ENCODE measurements at regions of chr11 and their contacts with region 1.

Region 1: GRCh38 chr11:75896843-75897419 is 81.9 kb downstream of the UVRAG start:
- DNase-seq: no peak
- ATAC-seq: peak in 1 of 2 donors; percentile 46
- H3K4me3 ChIP-seq: no peak overlapping the region
- H3K27ac ChIP-seq: no peak overlapping the region
- H3K4me1 ChIP-seq: peaks cover 13 to 21% of the 10 kb centered on the region in 2 donors
- H3K27me3 ChIP-seq: no peaks in the 10 kb centered on the region
- CTCF ChIP-seq: peak; percentile 61 to 74 (median 63)
- POLR2A ChIP-seq: no peak

Region 2: DNA sequence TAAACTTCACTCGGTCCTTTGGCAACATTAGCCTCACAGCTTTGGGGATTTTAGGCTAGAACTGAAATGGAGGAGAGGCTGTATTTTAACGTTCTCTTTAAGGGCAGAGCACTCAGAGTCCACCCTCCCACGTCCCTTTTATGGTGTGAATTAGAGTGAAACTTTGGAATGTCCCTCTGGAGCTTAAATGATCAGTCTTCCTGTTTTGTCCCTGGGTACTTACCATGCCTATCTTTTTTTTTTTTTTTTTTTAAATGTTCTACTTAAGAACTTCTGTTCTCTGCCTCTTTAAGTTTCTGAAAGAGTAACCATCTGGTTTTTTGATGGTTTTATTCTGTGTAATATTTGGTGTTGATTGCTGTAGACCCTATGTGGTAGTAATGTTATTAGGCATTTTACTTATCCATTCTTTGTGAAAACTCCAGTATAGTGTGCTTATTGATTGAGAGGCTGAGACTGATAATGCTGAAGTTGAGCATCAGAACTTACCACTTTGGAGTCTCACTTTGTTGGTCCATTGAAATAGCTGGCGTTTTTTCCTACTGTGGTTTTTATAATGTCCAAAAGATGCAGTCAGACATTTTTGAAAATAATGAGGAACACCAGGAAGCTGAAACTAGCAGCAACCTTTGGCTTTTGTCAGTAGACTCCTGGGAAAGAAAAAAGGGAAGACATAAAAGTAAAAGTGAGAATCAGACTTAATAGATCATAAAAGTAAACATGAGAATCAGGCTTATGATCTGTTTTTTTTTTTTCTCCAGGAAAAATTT is 70.3 kb before region 1 on chr11:
- in situ Hi-C with region 1: no loop called
- intact Hi-C with region 1: no loop called
- DNase-seq: no peak
- ATAC-seq: peak; percentile 89 to 94
- H3K4me3 ChIP-seq: peak overlapping the region; percentile 3 to 31 (median 27)
- H3K27ac ChIP-seq: peak overlapping the region; percentile 70 to 87 (median 80)
- H3K4me1 ChIP-seq: peaks cover 24 to 31% of the 10 kb centered on the region in 2 donors
- H3K27me3 ChIP-seq: no peaks in the 10 kb centered on the region
- CTCF ChIP-seq: no peak
- POLR2A ChIP-seq: peak in 1 of 2 donors; percentile 21

Region 3: DNA sequence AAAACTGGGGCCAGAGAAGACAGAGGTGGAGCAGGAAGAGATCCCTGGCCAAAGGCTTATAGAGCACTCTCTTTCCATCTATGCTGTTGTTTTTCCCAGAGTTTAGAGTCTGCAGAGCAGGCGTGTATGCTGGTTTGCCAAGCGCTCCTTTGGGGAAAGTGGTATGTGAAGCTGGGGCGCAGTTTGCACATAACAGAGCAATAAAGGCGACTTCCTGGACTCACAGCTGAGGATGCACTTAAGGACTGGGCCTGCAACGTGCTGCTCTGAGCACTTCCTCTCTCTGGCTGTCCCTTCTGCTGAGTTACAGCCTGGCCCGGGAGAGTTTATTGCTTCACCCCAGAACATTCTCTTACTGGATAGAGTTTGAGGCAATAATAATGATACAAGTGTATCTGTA is 442.3 kb after region 1 on chr11:
- in situ Hi-C with region 1: loop called in 1 of 4 experiments (anchors 10 kb)
- intact Hi-C with region 1: no loop called
- DNase-seq: peak; percentile 57 to 83
- ATAC-seq: peak; percentile 91 to 94
- H3K4me3 ChIP-seq: no peak overlapping the region
- H3K27ac ChIP-seq: peak overlapping the region; percentile 38 to 80 (median 69)
- H3K4me1 ChIP-seq: peaks cover 0 to 13% of the 10 kb centered on the region in 2 donors
- H3K27me3 ChIP-seq: no peaks in the 10 kb centered on the region
- CTCF ChIP-seq: no peak
- POLR2A ChIP-seq: no peak